ENCODE measurements at regions of chrX and their contacts with region 1.

Region 1: DNA sequence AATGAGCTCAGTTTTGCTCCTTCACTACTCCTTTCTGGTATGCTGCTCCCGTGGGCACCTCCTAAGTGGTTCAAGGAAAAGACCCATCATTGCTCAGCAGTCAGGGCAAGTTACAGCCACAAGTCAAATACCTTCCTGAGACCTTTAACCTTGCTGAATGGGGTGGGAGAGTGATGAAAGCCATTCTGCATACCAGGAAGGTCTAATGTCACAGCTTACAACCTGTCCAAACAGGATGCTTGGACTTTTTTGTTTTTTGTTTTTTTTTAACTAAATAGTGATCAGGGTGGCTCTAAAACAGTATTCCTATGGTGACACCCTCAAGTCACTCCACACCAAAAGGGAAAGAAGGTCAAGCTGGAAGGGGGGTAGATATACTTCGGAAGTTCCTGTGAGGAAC is 93.1 kb downstream of the GPC3 start:
- DNase-seq: no peak
- H3K4me3 ChIP-seq: no peak overlapping the region
- H3K27ac ChIP-seq: no peak overlapping the region
- H3K4me1 ChIP-seq: no peaks in the 10 kb centered on the region
- H3K27me3 ChIP-seq: peaks cover 0 to 9% of the 10 kb centered on the region in 2 donors
- CTCF ChIP-seq: no peak
- POLR2A ChIP-seq: no peak

Region 2: GRCh38 chrX:133709486-133709885 is 182.8 kb before region 1 on chrX:
- intact Hi-C with region 1: loop called (anchors 5 kb)
- DNase-seq: no peak
- H3K4me3 ChIP-seq: no peak overlapping the region
- H3K27ac ChIP-seq: no peak overlapping the region
- H3K4me1 ChIP-seq: no peaks in the 10 kb centered on the region
- H3K27me3 ChIP-seq: peaks cover 0 to 28% of the 10 kb centered on the region in 2 donors
- CTCF ChIP-seq: no peak
- POLR2A ChIP-seq: no peak

Region 3: GRCh38 chrX:135707880-135708279 is 1815.5 kb after region 1 on chrX:
- intact Hi-C with region 1: no loop called
- DNase-seq: no peak
- H3K4me3 ChIP-seq: no peak overlapping the region
- H3K27ac ChIP-seq: no peak overlapping the region
- H3K4me1 ChIP-seq: no peaks in the 10 kb centered on the region
- H3K27me3 ChIP-seq: peaks cover 0 to 8% of the 10 kb centered on the region in 2 donors
- CTCF ChIP-seq: no peak
- POLR2A ChIP-seq: no peak

Measured in breast epithelium (tissue), 4 donors.